Head of caudate nucleus (tissue), 42 donors: ENCODE measurements at regions of chr5 and their contacts with region 1.

Region 1: DNA sequence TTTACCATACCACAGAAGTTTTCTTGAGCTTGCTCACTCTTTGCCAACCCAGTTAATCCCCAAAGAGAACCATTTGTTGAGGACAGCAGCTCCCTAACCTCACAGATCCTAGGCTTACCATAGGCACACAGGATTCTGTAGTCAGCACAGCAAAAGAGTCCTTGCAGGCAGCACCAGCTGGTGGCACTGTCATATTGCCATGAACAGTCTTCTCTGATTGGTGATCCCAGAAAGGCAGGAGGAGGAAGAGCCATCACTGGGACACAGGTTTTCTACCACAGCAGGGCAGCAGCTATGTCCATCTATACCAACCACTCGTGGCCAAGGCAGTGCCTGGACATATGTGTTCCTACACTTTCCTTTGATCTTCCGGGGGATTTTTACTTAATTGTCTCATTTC is 297.1 kb upstream of the CD180 start:
- DNase-seq: peak; percentile 35 to 89 (median 76)

Region 2: GRCh38 chr5:68252673-68253623 is 759.3 kb after region 1 on chr5:
- intact Hi-C with region 1: loop called (anchors 10 kb)
- DNase-seq: peak in 41 of 42 donors; percentile 41 to 87 (median 66)